Thyroid gland (tissue), 4 donors: ENCODE measurements at regions of chr11 and their contacts with region 1.

Region 1: GRCh38 chr11:75399344-75400145 is at the start of gene RPS3:
- DNase-seq: peak; percentile 93 to 94
- H3K4me3 ChIP-seq: peak within 1 kb of the TSS; percentile 45 to 49 (median 46)
- H3K27ac ChIP-seq: peak within 1 kb of the TSS; percentile 81 to 93 (median 93)
- H3K4me1 ChIP-seq: peaks cover 8 to 23% of the 10 kb centered on the region in 2 donors
- H3K27me3 ChIP-seq: no peaks in the 10 kb centered on the region
- CTCF ChIP-seq: peak in 1 of 6 experiments; percentile 21
- POLR2A ChIP-seq: peak in 1 of 2 donors; percentile 94
- total RNA-seq, gene RPS3: 1,039 to 1,811 (median 1,104) TPM

Region 2: DNA sequence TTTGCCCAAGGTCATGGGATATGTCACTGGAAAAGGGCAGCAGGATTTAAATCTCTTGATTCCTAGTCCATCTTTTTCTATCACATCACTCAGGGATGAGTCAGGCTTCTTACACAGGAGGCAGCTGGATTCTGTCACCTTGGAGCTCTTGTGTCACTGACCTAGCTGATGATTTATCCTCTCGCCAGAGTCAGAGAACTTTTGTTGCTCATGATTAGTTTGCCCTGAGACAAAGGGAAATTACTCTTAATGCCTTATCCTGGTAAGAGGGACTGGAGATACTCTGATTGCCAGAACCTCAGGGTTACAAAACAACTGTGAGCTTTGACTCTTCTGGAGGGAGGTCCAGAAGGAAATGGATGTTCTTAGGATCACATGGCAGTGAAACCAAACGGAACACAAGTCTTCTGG is 1533.0 kb before region 1 on chr11:
- intact Hi-C with region 1: no loop called
- DNase-seq: no peak
- H3K4me3 ChIP-seq: no peak overlapping the region
- H3K27ac ChIP-seq: no peak overlapping the region
- H3K4me1 ChIP-seq: peaks cover 0 to 4% of the 10 kb centered on the region in 2 donors
- H3K27me3 ChIP-seq: no peaks in the 10 kb centered on the region
- CTCF ChIP-seq: no peak
- POLR2A ChIP-seq: no peak

Region 3: GRCh38 chr11:75525596-75526541 is 126.3 kb after region 1 on chr11 and contains the start of gene GDPD5:
- intact Hi-C with region 1: loop called (anchors 5 kb)
- DNase-seq: peak; percentile 74 to 76
- H3K4me3 ChIP-seq: peak within 1 kb of the TSS; percentile 18 to 51 (median 22)
- H3K27ac ChIP-seq: peak within 1 kb of the TSS in 1 of 3 donors; percentile 57
- H3K4me1 ChIP-seq: peaks cover 6 to 17% of the 10 kb centered on the region in 2 donors
- H3K27me3 ChIP-seq: no peaks in the 10 kb centered on the region
- CTCF ChIP-seq: peak in 3 of 6 experiments; percentile 32 to 66 (median 48)
- POLR2A ChIP-seq: peak in 1 of 2 donors; percentile 55
- total RNA-seq, gene GDPD5: 5.6 to 6.4 (median 6.1) TPM

Region 4: DNA sequence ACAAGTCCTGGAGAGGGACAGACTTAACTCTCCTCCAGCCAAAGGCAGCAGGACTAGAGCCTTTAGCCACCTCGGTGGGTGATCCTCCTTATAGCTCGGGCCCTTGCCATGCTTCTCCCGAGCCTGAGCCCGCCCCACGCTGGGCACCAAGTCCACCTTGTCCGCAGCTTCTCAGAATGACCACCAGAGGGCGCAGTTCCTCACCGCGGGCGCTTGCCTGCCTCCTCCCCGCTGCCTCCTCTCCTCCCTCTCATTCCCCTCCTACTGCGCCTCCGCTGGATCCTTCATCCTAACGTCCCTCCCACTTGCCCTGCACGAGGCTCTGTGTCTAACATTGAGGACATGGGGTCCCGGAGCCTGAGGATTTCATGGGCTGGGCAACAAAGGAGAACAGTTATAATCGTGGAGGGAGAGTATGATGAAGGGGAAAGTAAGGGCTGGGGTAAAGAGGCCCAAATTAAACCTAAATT is 306.8 kb after region 1 on chr11:
- intact Hi-C with region 1: no loop called
- DNase-seq: peak; percentile 61 to 69
- H3K4me3 ChIP-seq: no peak overlapping the region
- H3K27ac ChIP-seq: no peak overlapping the region
- H3K4me1 ChIP-seq: peaks cover 0 to 7% of the 10 kb centered on the region in 2 donors
- H3K27me3 ChIP-seq: no peaks in the 10 kb centered on the region
- CTCF ChIP-seq: peak; percentile 76 to 97 (median 88)
- POLR2A ChIP-seq: no peak